PC-9 (cell line): ENCODE measurements at regions of chr16 and their contacts with region 1.

Region 1: GRCh38 chr16:20300312-20301097 is 26.8 kb downstream of the GP2 start:
- DNase-seq: peak in 1 of 2 experiments; percentile 42
- H3K4me3 ChIP-seq: no peak overlapping the region
- H3K27ac ChIP-seq: no peak overlapping the region
- H3K4me1 ChIP-seq: no peaks in the 10 kb centered on the region
- H3K27me3 ChIP-seq: peaks cover 5% of the 10 kb centered on the region; the same call in 1 of the 2 replicates
- CTCF ChIP-seq: peak; percentile 75

Region 2: DNA sequence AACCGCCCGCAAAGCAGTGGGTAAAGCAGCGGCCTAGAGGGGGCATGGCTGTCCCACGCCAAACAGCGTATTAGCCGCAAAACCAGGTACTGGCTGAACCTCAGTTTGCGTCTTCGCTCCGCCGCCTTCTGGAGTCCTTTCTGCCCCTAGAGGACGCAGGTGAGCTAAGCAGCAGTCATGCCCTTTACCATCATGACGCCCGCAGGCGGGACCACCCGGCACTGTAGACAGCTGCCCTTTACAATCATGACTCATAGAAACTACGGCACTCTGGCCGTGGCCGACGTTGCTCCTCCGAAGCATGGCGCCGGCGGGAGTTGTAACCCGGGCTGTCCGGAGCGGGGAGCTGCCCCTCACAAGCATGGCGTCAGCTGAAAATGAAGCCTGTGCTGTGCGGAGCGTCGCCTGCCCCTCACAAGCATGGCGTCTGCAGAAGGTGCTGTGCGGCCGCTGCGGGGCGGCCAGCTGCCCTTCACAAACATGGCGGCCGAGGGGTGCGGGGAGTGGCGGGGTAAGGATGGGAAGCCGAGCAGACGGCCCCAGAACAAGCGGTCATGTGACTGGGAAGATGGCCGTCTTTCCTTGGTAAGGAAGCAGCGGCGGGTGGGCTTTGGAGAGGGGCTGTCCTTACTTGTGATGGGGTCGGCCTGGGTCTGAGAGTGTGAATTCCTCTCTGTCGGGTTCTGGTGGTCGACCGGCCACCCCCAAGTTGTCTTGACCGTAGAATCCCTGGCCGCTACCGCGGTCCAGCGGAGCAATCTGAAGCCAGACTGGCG is 745.2 kb before region 1 on chr16 and contains the start of gene VPS35L:
- CTCF ChIA-PET with region 1: no interaction called
- POLR2A ChIA-PET with region 1: no interaction called
- intact Hi-C with region 1: loop called (anchors 5 kb)
- DNase-seq: peak; percentile 73 to 92
- H3K4me3 ChIP-seq: peak within 1 kb of the TSS; percentile 61
- H3K27ac ChIP-seq: no peak within 1 kb of the TSS
- H3K4me1 ChIP-seq: no peaks in the 10 kb centered on the region; the same call in 1 of the 2 replicates
- H3K27me3 ChIP-seq: no peaks in the 10 kb centered on the region
- CTCF ChIP-seq: peak; percentile 62
- total RNA-seq, gene VPS35L: 11.7 and 12.1 TPM in 2 replicates

Region 3: GRCh38 chr16:19907161-19907992 is 393.1 kb before region 1 on chr16:
- CTCF ChIA-PET with region 1: interaction called, 21 read pairs
- POLR2A ChIA-PET with region 1: no interaction called
- intact Hi-C with region 1: loop called (anchors 1 kb)
- DNase-seq: peak; percentile 49 to 73
- H3K4me3 ChIP-seq: no peak overlapping the region
- H3K27ac ChIP-seq: no peak overlapping the region
- H3K4me1 ChIP-seq: no peaks in the 10 kb centered on the region
- H3K27me3 ChIP-seq: peaks cover 34% of the 10 kb centered on the region
- CTCF ChIP-seq: peak; percentile 95

Region 4: DNA sequence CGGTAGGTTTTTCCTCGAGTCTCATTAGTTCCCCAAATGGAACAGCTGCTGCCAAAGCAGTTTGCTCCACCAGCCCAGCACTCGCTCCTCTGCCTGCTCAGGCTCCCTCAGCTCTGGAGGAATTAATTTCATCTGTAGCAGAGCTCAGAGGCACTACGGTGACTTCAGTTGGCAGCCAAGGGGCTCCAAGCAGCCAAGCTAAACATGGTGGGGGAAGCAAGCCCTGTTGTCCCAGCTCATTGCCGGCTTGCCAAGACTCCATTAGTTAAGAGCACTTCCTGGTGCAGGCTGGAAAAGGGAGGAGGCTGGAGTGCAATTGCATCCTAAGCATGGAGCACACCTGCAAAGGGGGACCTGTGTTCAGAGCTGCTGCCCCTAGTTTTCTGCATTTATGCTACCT is 337.2 kb before region 1 on chr16:
- CTCF ChIA-PET with region 1: no interaction called
- POLR2A ChIA-PET with region 1: no interaction called
- intact Hi-C with region 1: no loop called
- DNase-seq: no peak
- H3K4me3 ChIP-seq: no peak overlapping the region
- H3K27ac ChIP-seq: no peak overlapping the region
- H3K4me1 ChIP-seq: no peaks in the 10 kb centered on the region
- H3K27me3 ChIP-seq: peaks cover 68% of the 10 kb centered on the region
- CTCF ChIP-seq: no peak

Region 5: DNA sequence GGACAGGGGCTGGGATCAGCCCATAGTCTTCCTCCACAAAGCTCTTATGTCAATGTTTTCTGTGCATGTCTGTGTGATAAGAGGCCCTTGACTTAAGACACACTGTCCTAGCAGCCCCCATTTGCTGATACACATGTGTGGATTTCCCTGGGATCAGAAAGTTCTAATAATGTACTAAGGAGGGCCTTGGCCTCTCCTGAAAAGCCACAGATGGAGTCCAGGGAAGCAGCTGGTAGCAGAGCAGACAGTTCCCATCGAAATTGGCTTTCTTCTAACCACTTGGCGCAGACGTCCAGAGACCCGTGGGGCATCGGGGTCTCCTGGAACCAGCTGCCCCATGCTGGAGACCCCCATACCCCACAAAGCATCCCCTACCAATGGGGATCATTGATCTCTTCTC is 31.1 kb after region 1 on chr16:
- CTCF ChIA-PET with region 1: no interaction called
- POLR2A ChIA-PET with region 1: interaction called, 14 read pairs
- intact Hi-C with region 1: no loop called
- DNase-seq: no peak
- H3K4me3 ChIP-seq: no peak overlapping the region
- H3K27ac ChIP-seq: no peak overlapping the region
- H3K4me1 ChIP-seq: no peaks in the 10 kb centered on the region
- H3K27me3 ChIP-seq: peaks cover 12% of the 10 kb centered on the region; the same call in 1 of the 2 replicates
- CTCF ChIP-seq: no peak

Region 6: DNA sequence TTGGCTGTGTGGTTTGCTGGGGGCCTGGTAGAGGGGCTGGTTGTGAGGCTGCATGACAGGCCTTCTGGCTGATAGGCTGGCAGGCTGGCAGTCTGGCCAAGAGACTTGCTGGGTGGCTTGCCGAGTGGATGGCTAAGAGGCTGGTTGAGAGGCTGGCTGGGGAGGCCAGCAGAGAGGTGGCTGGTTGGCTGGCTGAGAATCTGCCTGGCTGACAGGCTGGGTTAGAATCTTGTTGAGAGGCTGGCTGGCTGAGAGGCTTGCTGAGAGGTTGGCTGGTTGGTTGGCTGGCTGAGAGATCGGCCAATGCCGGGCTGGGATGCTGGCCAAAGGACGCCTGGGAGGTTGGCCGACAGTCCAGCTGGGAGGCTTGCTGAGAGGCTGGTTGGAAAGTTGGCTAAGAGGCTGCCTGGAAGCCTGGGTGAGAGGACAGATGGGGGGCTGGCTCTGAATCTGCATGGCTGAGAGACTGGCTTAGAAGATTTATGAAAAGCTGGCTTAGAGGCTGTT is 311.5 kb after region 1 on chr16:
- CTCF ChIA-PET with region 1: no interaction called
- POLR2A ChIA-PET with region 1: no interaction called
- intact Hi-C with region 1: no loop called
- DNase-seq: no peak
- H3K4me3 ChIP-seq: no peak overlapping the region
- H3K27ac ChIP-seq: no peak overlapping the region
- H3K4me1 ChIP-seq: no peaks in the 10 kb centered on the region
- H3K27me3 ChIP-seq: peaks cover 50% of the 10 kb centered on the region
- CTCF ChIP-seq: no peak

Region 7: DNA sequence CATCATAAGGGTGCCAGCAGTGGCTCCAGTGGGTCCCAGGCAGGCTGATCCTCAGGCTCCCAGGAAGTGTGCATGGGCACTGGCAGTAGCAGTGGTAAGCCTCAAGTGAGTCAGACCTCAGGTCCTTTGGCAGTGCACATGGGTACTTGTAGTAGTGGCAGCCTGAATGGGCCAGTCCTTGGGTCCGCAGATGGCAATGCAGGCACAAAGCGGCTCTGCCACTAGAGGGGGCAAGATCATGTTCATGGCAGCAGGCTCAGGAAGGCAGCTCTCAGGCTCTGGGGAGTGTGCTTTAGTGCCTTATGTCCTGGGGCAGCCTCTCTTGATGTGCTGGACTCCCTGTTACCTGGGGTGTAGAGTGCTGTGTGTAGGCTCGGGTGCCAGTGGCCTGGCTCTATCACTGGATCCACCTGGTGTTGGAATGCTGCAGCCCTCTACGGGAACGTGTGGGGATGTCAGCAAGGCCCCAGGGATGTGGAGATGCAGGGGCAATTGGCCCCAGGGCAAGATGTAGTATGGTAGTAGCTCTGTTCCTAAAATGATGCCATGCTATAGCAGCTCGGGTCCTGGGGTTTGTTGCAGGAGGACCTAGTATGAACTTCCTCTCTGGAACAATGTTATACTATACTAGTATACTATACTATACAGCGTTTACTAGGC is 474.3 kb after region 1 on chr16:
- CTCF ChIA-PET with region 1: no interaction called
- POLR2A ChIA-PET with region 1: no interaction called
- intact Hi-C with region 1: no loop called
- DNase-seq: peak in 1 of 2 experiments; percentile 64
- H3K4me3 ChIP-seq: no peak overlapping the region
- H3K27ac ChIP-seq: no peak overlapping the region
- H3K4me1 ChIP-seq: no peaks in the 10 kb centered on the region
- H3K27me3 ChIP-seq: no peaks in the 10 kb centered on the region; the same call in 1 of the 2 replicates
- CTCF ChIP-seq: peak; percentile 74